PC-3 (cell line): ENCODE measurements at regions of chr2 and their contacts with region 1.

Region 1: GRCh38 chr2:197113275-197113711 is 186.8 kb upstream of the PGAP1 start:
- DNase-seq: peak; percentile 61
- ATAC-seq: peak; percentile 37; the same call in 1 of the 2 replicates
- H3K4me3 ChIP-seq: no peak overlapping the region
- H3K27ac ChIP-seq: no peak overlapping the region
- H3K4me1 ChIP-seq: peaks cover 4% of the 10 kb centered on the region; the same call in 1 of the 2 replicates
- H3K27me3 ChIP-seq: no peaks in the 10 kb centered on the region
- CTCF ChIP-seq: peak; percentile 71

Region 2: DNA sequence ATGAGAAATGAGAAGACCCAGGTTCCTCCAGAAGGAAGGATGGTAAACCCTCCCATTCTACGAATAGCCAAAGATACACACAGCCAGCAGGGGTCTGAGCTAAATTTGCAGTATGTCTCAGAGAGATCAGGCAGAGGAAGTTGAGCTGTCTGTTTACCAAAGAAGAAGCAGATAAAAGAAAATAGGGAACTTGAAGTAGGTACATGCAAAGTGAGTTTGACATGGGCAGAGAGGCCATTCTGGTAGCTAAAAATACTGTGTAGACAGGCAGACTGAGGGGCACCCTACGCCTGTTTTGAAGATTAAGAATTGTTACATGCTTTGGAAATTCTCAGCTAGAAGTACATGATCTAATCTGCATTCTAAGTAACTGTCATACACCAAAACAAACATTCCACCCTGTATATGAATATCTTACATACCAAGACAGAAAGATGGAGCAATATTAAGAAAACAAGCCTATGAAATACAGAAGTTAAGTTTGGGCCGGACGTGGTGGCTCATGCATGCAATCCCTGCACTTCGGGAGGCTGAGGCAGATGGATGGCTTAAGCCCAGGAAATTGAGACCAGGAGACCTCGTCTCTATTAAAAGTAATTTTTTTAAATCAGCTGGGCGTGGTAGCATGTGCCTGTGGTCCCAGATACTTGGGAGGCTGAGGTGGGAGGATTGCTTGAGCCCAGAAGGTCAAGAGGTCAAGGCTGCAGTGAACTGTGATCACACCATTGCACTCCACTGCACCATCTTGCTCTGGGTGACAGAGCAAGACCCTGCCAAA is 39.3 kb after region 1 on chr2:
- CTCF ChIA-PET with region 1: no interaction called
- POLR2A ChIA-PET with region 1: no interaction called
- intact Hi-C with region 1: no loop called
- DNase-seq: peak; percentile 13
- ATAC-seq: peak; percentile 72
- H3K4me3 ChIP-seq: no peak overlapping the region
- H3K27ac ChIP-seq: no peak overlapping the region
- H3K4me1 ChIP-seq: peaks cover 9% of the 10 kb centered on the region
- H3K27me3 ChIP-seq: no peaks in the 10 kb centered on the region
- CTCF ChIP-seq: no peak

Region 3: GRCh38 chr2:197168705-197169104 is 55.4 kb after region 1 on chr2:
- CTCF ChIA-PET with region 1: no interaction called
- POLR2A ChIA-PET with region 1: no interaction called
- intact Hi-C with region 1: loop called (anchors 1 kb)
- DNase-seq: peak; percentile 67
- ATAC-seq: peak; percentile 67
- H3K4me3 ChIP-seq: no peak overlapping the region
- H3K27ac ChIP-seq: no peak overlapping the region
- H3K4me1 ChIP-seq: peaks cover 14% of the 10 kb centered on the region
- H3K27me3 ChIP-seq: no peaks in the 10 kb centered on the region
- CTCF ChIP-seq: peak; percentile 86

Region 4: DNA sequence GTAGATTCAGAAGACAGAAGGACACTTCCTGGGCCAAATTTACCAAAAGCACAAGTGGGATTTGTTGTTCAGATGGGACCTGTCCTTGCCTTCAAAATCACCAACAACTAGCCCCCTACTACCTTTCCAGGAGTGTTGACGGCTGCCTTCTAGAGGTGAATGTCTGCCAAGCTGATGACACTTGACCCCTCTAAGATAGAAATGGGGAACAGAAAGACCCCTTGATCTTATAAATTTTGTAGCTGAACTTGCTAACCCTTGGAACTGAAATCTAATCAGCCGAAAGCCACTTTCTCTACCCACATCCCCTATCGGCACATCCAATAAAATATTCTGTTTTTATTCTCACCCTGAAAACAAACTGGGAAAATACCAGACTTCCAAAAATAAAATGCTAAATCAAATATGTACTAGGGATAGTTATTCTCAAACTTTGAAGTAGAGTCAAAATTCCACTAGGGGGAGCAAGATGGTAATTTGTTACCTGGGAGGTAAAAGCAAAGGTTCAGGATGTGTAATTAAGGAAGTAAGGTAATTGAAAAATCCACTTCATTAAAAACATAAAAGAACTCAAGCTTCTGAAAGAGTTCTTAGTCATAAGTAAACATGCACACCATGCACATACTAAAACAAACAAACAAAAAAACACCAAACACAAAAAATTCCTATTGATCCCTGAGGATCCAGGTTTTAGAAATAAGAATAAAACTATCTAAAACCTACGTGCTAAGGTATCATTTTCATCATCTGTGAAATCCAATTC is 78.1 kb after region 1 on chr2:
- CTCF ChIA-PET with region 1: no interaction called
- POLR2A ChIA-PET with region 1: no interaction called
- intact Hi-C with region 1: loop called (anchors 1 kb)
- DNase-seq: peak; percentile 76
- ATAC-seq: peak; percentile 37
- H3K4me3 ChIP-seq: no peak overlapping the region
- H3K27ac ChIP-seq: no peak overlapping the region
- H3K4me1 ChIP-seq: no peaks in the 10 kb centered on the region
- H3K27me3 ChIP-seq: no peaks in the 10 kb centered on the region
- CTCF ChIP-seq: peak; percentile 88

Region 5: DNA sequence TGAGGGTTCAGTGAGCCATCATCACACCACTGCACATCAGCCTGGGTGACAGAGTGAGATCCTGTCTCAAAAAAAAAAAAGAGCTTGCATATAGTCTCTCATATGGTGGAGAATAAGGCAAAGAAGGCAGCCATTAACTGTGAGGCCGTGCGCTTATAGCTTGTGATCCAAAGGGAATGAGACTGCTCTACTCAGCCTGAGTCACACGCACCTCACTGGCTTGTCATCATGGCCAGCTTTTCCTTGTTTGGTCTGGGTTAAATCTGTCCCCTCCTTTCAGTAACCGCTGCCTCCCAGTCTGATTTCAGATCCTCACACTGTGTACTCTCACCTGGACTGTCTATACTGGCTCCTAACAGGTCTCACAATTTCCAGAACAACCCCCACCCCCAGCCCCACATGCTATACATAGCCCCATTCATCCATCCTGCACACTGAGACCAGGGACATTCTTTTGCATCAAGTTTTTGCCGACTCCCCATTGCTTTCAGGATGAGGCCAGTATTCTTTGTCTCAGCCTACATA is 232.6 kb after region 1 on chr2:
- CTCF ChIA-PET with region 1: no interaction called
- POLR2A ChIA-PET with region 1: no interaction called
- intact Hi-C with region 1: no loop called
- DNase-seq: peak; percentile 73
- ATAC-seq: peak; percentile 92
- H3K4me3 ChIP-seq: no peak overlapping the region
- H3K27ac ChIP-seq: no peak overlapping the region
- H3K4me1 ChIP-seq: peaks cover 5% of the 10 kb centered on the region
- H3K27me3 ChIP-seq: no peaks in the 10 kb centered on the region
- CTCF ChIP-seq: no peak